ENCODE measurements at regions of chr11 and their contacts with region 1.

Region 1: DNA sequence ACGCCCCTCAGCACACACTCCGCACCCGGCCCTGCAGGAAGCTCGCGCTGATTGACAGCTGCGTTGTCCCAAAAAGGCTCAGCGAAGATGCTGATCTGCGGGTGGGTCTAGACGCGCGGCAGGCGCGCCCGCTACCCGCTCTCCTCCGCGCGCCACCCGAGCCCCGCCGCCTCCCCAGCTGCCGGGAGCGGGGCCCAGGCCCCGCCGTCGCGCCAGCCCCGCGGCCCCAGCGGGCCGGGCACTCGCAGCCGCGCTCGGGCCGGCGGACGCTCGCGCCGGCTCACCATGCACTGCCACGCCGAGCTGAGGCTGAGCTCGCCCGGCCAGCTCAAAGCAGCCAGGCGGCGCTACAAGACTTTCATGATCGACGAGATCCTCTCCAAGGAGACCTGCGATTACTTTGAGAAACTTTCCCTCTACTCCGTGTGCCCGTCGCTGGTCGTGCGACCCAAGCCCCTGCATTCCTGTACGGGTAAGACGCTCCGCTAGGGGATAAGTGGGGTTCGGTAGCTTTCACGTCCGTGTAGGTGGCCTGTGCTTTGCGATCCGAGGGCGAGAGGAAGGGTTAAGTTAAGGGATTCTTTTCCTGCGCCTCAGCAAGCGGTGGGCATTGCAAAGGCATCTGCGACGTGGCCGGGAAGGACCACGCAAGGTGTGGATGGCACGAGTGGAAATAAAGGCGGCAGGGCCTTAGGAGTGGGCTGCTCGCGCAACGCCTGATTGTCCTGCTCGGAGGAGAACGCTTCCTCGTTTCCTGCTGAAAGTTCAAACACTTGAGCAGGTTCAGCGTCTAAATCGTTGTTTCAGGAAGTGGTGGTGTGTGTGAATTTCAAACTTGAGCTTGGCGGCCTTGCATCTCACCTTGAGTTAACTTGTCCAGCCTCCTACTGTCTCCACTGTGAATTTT is at the start of gene BARX2:
- DNase-seq: peak in 2 of 3 donors; percentile 61 to 62
- ATAC-seq: peak; percentile 72 to 83 (median 78)
- H3K4me3 ChIP-seq: peak within 1 kb of the TSS in 1 of 3 donors; percentile 35
- H3K27ac ChIP-seq: no peak within 1 kb of the TSS
- H3K4me1 ChIP-seq: peaks cover 0 to 26% (median 6%) of the 10 kb centered on the region in 4 donors
- H3K27me3 ChIP-seq: peaks cover 11 to 60% of the 10 kb centered on the region in 2 donors
- CTCF ChIP-seq: peak; percentile 31 to 63 (median 42)
- POLR2A ChIP-seq: no peak
- total RNA-seq, gene BARX2: not detected

Region 2: GRCh38 chr11:129538323-129538722 is 162.3 kb after region 1 on chr11:
- intact Hi-C with region 1: no loop called
- DNase-seq: no peak
- ATAC-seq: no peak
- H3K4me3 ChIP-seq: no peak overlapping the region
- H3K27ac ChIP-seq: no peak overlapping the region
- H3K4me1 ChIP-seq: no peaks in the 10 kb centered on the region
- H3K27me3 ChIP-seq: no peaks in the 10 kb centered on the region
- CTCF ChIP-seq: no peak
- POLR2A ChIP-seq: no peak

Region 3: GRCh38 chr11:129695575-129696308 is 319.7 kb after region 1 on chr11:
- intact Hi-C with region 1: loop called in 1 of 2 experiments (anchors 10 kb)
- DNase-seq: peak; percentile 54 to 67 (median 64)
- ATAC-seq: peak; percentile 90 to 95 (median 92)
- H3K4me3 ChIP-seq: peak overlapping the region in 2 of 3 donors; percentile 14 to 33
- H3K27ac ChIP-seq: no peak overlapping the region
- H3K4me1 ChIP-seq: peaks cover 0 to 4% (median 0%) of the 10 kb centered on the region in 4 donors
- H3K27me3 ChIP-seq: no peaks in the 10 kb centered on the region
- CTCF ChIP-seq: peak; percentile 57 to 79 (median 68)
- POLR2A ChIP-seq: no peak

Region 4: GRCh38 chr11:129743111-129743815 is 367.3 kb after region 1 on chr11:
- intact Hi-C with region 1: loop called in 1 of 2 experiments (anchors 10 kb)
- DNase-seq: peak in 1 of 3 donors; percentile 32
- ATAC-seq: no peak
- H3K4me3 ChIP-seq: no peak overlapping the region
- H3K27ac ChIP-seq: no peak overlapping the region
- H3K4me1 ChIP-seq: no peaks in the 10 kb centered on the region
- H3K27me3 ChIP-seq: no peaks in the 10 kb centered on the region
- CTCF ChIP-seq: no peak
- POLR2A ChIP-seq: no peak

Measured in right lobe of liver (tissue), 6 donors.